GM13976 (cell line): ENCODE measurements at regions of chr2 and their contacts with region 1.

Region 1: DNA sequence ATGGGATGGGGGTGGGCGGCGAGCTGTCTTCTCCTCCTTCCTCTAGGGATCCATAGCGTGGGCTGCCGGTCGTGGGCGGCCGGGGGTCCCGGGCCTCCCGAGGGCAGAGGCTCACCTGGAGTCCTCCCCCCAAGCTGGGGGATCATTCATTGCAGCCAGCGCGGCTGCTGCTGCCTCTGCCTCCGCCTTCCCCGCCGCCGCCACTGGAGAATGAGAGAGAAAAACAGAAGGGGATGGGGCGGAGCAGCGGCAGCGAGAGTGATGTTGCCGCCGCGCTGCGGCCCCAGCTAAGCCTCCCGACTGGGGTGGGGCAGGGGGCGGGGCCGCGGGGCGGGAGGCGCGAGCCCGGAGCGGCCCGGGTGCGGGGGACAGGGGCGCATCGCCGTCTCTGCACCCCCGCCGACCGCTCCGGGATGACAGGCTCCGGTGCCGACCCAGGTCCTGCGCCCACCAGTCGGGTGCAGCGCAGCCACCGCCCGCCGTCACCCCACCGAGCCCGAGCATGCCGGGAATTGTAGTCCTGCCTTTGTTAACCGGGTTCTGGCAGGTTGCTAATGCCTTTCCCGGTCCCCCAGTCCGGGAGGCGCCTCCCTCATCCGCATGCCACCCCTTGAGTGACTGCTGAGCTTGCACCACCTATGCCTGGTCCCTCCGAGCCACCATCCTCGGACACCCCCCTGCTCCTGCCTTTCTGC is at the start of gene KIF3C:
- DNase-seq: peak; percentile 88
- CTCF ChIP-seq: no peak

Region 2: DNA sequence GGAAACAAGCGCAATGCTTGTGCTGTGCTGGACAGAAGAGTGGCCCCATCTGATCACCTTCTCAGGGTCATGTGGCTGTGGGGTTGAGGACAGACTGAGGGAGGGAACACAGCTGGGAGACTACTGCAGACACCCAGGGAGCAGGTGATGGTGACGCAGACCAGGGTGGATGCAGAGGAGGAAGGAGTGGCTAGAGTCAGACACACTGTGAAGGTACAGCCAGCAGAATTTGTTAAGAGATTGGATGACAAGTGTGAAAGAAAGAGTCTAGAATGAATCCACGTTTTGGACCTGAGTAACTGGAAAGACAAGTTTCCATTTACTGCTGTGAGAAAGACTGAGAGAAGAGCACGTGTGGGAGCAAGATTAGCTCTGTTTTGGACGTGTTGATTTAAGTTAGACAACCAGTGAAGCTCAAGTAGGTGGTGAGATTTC is 798.1 kb before region 1 on chr2:
- in situ Hi-C with region 1: no loop called
- DNase-seq: no peak
- CTCF ChIP-seq: no peak

Region 3: DNA sequence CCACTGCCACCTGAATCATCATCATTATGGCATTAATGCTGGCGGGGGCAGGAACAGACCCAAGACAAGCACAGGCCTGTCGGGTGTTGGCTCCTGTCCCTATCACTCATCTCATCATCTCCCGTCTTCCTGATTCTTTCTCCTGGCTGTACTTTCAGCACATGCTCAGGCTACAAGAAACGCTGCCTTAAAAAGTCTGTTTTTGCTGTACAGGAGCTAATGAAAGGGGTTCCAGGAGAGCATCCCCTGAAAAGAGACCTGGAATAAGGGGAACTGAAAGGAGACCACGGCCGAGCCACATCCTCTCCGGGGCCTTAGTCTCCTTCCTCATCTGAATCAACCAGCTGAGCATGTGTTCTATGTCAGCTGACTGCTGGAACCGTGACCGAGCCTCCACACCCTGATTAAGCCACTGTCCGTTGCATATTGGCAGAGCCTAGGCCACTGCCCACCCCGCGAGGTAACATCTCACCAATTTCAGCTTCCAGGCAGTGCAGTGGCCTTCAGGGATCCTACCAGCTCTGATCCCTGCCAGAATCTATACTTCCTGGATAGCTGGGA is 703.2 kb before region 1 on chr2:
- in situ Hi-C with region 1: no loop called
- DNase-seq: peak; percentile 85
- CTCF ChIP-seq: no peak

Region 4: GRCh38 chr2:26345545-26346453 is 363.4 kb after region 1 on chr2 and contains the start of gene SELENOI:
- in situ Hi-C with region 1: loop called (anchors 25 kb)
- DNase-seq: peak; percentile 98
- CTCF ChIP-seq: no peak